Adrenal gland (tissue), 19 donors: ENCODE measurements at regions of chr4 and their contacts with region 1.

Region 1: GRCh38 chr4:184745831-184746795 is 12.2 kb upstream of the CENPU start:
- DNase-seq: peak; percentile 71 to 91 (median 80)
- H3K4me3 ChIP-seq: no peak overlapping the region
- H3K27ac ChIP-seq: peak overlapping the region in 3 of 5 donors; percentile 26 to 76 (median 73)
- H3K4me1 ChIP-seq: peaks cover 0 to 19% of the 10 kb centered on the region in 2 donors
- H3K27me3 ChIP-seq: no peaks in the 10 kb centered on the region
- CTCF ChIP-seq: peak; percentile 67 to 85 (median 74)
- POLR2A ChIP-seq: no peak

Region 2: DNA sequence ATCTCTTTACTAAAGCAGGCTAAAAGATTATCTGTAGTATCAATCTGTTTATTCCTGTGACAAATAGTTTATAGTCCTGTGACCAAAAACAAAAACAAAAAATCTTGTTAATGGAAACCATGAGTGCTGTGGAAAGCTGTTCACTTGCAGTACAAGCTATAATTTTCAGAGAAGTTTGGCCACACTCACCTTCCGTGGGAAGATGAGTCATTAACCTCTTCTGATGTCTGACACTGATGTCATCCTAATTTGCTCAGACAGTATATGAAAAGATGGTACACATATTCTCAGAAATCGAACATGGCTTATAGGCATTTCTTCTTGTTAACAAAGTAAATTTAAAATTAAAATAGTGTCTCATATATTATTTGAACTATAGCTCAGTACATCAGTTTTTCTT is 508.5 kb before region 1 on chr4:
- intact Hi-C with region 1: no loop called
- DNase-seq: no peak
- H3K4me3 ChIP-seq: no peak overlapping the region
- H3K27ac ChIP-seq: no peak overlapping the region
- H3K4me1 ChIP-seq: no peaks in the 10 kb centered on the region
- H3K27me3 ChIP-seq: no peaks in the 10 kb centered on the region
- CTCF ChIP-seq: no peak
- POLR2A ChIP-seq: no peak

Region 3: DNA sequence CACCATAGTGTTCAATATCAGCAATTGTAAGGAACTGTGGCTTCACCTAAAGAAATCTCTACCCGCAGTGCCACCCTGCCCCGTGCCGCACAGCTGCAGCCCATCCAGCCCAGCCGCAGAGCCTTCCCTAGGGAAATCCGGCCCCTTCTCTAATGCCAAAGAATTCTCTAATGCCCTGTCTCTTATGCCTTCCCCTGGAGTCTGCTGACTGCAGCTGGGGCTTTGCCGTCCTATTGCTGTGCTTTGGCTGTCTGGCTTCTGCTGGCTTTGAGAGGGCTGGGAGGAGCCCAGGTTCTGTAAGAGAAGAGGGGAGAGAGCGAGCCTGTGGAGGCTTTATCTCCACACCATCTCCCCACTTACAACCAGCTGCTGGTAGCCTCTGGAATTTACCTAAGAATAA is 186.2 kb after region 1 on chr4:
- intact Hi-C with region 1: no loop called
- DNase-seq: no peak
- H3K4me3 ChIP-seq: no peak overlapping the region
- H3K27ac ChIP-seq: no peak overlapping the region
- H3K4me1 ChIP-seq: no peaks in the 10 kb centered on the region
- H3K27me3 ChIP-seq: no peaks in the 10 kb centered on the region
- CTCF ChIP-seq: no peak
- POLR2A ChIP-seq: no peak

Region 4: DNA sequence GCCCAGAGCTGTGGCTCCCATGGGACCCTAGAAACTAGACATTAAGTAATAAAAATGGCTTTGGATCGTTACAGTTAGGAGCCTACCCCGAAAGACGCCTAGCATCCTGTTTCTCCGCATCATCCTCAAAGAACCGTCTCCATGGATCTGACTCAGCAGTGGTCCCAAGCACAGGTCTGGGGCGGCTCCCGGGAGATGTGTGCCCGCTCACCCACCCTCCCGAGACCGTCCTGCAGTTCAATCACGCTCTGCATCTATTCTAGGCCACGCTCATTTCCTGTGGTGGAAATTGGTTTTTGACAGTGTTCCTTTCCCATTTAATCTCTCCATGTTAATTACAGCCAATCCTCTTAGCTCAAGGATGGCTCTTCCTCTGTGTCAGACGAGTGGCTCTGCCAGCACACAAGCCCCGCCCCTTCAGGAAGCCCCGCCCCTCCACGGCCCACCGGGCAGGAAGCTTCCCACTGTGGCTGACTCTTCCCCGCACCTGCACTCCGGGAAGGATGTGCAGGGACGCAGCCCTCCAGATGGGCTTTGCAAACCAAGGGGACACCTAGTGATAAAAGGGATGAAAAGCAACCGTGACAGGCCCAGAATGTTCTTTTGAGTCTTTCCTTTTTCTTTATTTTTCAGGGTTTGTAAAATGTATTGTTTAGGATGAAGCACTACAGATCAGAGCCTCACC is 237.7 kb after region 1 on chr4:
- intact Hi-C with region 1: loop called (anchors 5 to 10 kb)
- DNase-seq: peak; percentile 26 to 73 (median 64)
- H3K4me3 ChIP-seq: no peak overlapping the region
- H3K27ac ChIP-seq: no peak overlapping the region
- H3K4me1 ChIP-seq: no peaks in the 10 kb centered on the region
- H3K27me3 ChIP-seq: peaks cover 4% of the 10 kb centered on the region
- CTCF ChIP-seq: peak in 4 of 6 experiments; percentile 40 to 49 (median 48)
- POLR2A ChIP-seq: no peak